Ovary (tissue), 10 donors: ENCODE measurements at regions of chr4 and their contacts with region 1.

Region 1: GRCh38 chr4:84966383-84967242 is at the start of gene WDFY3:
- DNase-seq: peak; percentile 81 to 87 (median 83)
- H3K4me3 ChIP-seq: peak within 1 kb of the TSS; percentile 90
- H3K27ac ChIP-seq: peak within 1 kb of the TSS; percentile 96 to 97
- H3K4me1 ChIP-seq: peaks cover 2% of the 10 kb centered on the region
- H3K27me3 ChIP-seq: no peaks in the 10 kb centered on the region
- CTCF ChIP-seq: no peak
- EP300 ChIP-seq: no peak
- POLR2A ChIP-seq: peak; percentile 58
- total RNA-seq, gene WDFY3: 66.9 to 90.0 (median 77.6) TPM

Region 2: GRCh38 chr4:82968972-82969371 is 1997.6 kb before region 1 on chr4:
- intact Hi-C with region 1: no loop called
- DNase-seq: no peak
- H3K4me3 ChIP-seq: no peak overlapping the region
- H3K27ac ChIP-seq: no peak overlapping the region
- H3K4me1 ChIP-seq: no peaks in the 10 kb centered on the region
- H3K27me3 ChIP-seq: no peaks in the 10 kb centered on the region
- CTCF ChIP-seq: no peak
- EP300 ChIP-seq: no peak
- POLR2A ChIP-seq: no peak

Region 3: DNA sequence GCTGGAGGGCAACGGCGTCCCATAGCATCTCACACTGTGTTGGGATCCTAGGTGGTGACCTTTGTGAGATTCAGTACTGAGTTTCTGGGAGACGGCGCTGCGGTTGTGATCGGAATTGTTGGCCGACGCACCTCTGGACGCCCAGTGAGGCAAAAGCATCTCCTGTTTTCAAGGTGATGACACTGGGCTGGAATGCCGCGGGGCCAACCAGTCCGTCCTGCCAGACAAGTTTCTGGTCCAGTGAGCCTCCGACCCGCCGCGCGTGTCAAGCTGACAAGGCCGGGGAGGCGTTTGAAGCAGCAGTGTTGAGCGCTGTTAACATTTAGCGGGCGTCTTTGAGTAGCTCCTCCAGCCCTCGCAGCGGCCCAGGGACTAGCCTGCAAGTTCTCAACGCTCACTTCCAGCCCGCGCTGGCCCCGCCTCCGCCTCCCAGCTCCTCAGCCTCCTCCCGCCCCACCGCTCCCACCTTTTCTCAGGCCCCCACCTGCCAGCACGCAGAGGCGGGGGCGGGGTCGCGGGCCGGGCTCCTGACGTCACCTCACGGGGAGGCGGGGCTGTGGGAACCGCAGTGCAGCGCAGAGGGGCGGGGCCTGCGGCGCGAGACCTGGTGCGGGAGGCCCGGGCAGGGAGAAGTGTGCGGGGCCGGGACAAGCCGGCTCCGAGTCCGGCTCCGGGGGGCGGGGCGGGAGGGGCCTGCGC is 384.2 kb before region 1 on chr4:
- intact Hi-C with region 1: loop called in 3 of 4 experiments (anchors 5 to 10 kb)
- DNase-seq: peak; percentile 97 to 98 (median 97)
- H3K4me3 ChIP-seq: peak overlapping the region; percentile 68
- H3K27ac ChIP-seq: peak overlapping the region; percentile 66 to 89
- H3K4me1 ChIP-seq: peaks cover 4% of the 10 kb centered on the region
- H3K27me3 ChIP-seq: no peaks in the 10 kb centered on the region
- CTCF ChIP-seq: no peak
- EP300 ChIP-seq: no peak
- POLR2A ChIP-seq: peak; percentile 69

Region 4: GRCh38 chr4:84750253-84750959 is 216.2 kb before region 1 on chr4:
- intact Hi-C with region 1: loop called (anchors 5 kb)
- DNase-seq: no peak
- H3K4me3 ChIP-seq: no peak overlapping the region
- H3K27ac ChIP-seq: no peak overlapping the region
- H3K4me1 ChIP-seq: no peaks in the 10 kb centered on the region
- H3K27me3 ChIP-seq: no peaks in the 10 kb centered on the region
- CTCF ChIP-seq: peak; percentile 32 to 54 (median 52)
- EP300 ChIP-seq: no peak
- POLR2A ChIP-seq: no peak

Region 5: GRCh38 chr4:84814094-84814750 is 152.4 kb before region 1 on chr4:
- intact Hi-C with region 1: no loop called
- DNase-seq: peak in 1 of 5 donors; percentile 24
- H3K4me3 ChIP-seq: no peak overlapping the region
- H3K27ac ChIP-seq: no peak overlapping the region
- H3K4me1 ChIP-seq: no peaks in the 10 kb centered on the region
- H3K27me3 ChIP-seq: no peaks in the 10 kb centered on the region
- CTCF ChIP-seq: no peak
- EP300 ChIP-seq: no peak
- POLR2A ChIP-seq: no peak